Colonic mucosa (tissue), 4 donors: ENCODE measurements at regions of chr3 and their contacts with region 1.

Region 1: GRCh38 chr3:97793420-97794019 is 28.3 kb upstream of the CRYBG3 start:
- DNase-seq: no peak
- H3K4me3 ChIP-seq: no peak overlapping the region
- H3K27ac ChIP-seq: no peak overlapping the region
- H3K4me1 ChIP-seq: no peaks in the 10 kb centered on the region
- H3K27me3 ChIP-seq: no peaks in the 10 kb centered on the region
- CTCF ChIP-seq: peak; percentile 67

Region 2: GRCh38 chr3:97495896-97496295 is 297.6 kb before region 1 on chr3:
- intact Hi-C with region 1: no loop called
- DNase-seq: no peak
- H3K4me3 ChIP-seq: no peak overlapping the region
- H3K27ac ChIP-seq: no peak overlapping the region
- H3K4me1 ChIP-seq: no peaks in the 10 kb centered on the region
- H3K27me3 ChIP-seq: no peaks in the 10 kb centered on the region
- CTCF ChIP-seq: no peak

Region 3: GRCh38 chr3:97932387-97932801 is 138.9 kb after region 1 on chr3:
- intact Hi-C with region 1: loop called (anchors 10 kb)
- DNase-seq: no peak
- H3K4me3 ChIP-seq: no peak overlapping the region
- H3K27ac ChIP-seq: no peak overlapping the region
- H3K4me1 ChIP-seq: no peaks in the 10 kb centered on the region
- H3K27me3 ChIP-seq: no peaks in the 10 kb centered on the region
- CTCF ChIP-seq: no peak

Region 4: DNA sequence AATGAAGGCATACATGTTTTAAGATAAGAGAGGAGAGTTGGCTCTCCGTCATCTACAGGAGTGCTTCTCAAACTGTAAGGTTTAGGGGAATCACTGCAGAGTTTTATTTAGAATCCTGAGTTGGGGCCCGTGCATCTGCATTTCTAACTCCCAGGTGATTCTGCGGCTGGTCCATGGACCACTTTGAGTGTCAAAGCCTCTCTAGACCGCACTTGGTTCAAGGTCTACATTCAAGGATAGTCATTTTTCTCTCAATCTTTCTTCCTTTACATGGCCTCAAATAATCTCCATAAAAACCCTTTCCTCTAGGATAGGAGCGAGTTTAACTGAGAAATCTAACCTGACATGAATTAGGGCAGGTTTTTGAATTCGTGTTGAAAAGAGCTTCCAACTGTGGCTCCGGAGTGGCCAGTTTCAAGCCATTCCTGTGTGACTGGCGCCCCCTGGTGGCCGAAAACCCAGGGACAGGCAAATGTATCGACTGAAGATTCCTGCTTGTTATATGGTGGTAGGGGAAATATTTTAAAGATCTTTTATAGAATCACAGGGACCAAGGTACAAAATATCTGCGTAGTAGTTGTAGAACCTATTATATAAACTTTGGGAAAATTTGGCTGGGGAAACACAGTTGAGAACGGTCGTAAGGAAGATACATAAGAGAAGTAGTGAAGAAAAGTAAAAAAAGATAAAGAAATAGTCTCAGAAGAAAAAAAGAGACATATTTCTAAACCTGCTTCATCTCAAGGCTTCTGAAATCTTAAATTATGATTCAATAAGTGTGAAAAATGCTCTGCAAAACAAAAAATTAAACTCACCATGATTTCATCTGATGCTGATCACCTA is 229.7 kb after region 1 on chr3:
- intact Hi-C with region 1: loop called (anchors 2 kb)
- DNase-seq: peak; percentile 92
- H3K4me3 ChIP-seq: no peak overlapping the region
- H3K27ac ChIP-seq: no peak overlapping the region
- H3K4me1 ChIP-seq: no peaks in the 10 kb centered on the region
- H3K27me3 ChIP-seq: no peaks in the 10 kb centered on the region
- CTCF ChIP-seq: peak; percentile 97

Region 5: DNA sequence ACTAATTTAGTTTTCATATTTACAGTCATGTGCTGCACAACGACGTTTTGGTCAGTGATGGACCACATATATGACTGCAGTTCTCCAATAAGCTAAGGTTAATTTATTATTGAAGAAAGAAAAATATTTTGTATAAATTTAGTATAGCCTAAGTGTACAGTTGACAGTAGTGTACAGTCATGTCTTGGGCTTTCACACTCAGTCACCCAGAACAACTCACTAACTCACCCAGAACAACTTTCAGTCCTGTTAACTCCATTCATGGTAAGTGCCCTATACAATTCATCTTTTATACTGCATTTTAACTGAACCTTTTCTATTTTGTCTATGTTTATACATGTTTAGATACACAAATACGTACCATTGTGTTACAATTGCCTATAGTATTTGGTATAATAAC is 245.4 kb after region 1 on chr3:
- intact Hi-C with region 1: no loop called
- DNase-seq: no peak
- H3K4me3 ChIP-seq: no peak overlapping the region
- H3K27ac ChIP-seq: no peak overlapping the region
- H3K4me1 ChIP-seq: no peaks in the 10 kb centered on the region
- H3K27me3 ChIP-seq: no peaks in the 10 kb centered on the region
- CTCF ChIP-seq: no peak

Region 6: DNA sequence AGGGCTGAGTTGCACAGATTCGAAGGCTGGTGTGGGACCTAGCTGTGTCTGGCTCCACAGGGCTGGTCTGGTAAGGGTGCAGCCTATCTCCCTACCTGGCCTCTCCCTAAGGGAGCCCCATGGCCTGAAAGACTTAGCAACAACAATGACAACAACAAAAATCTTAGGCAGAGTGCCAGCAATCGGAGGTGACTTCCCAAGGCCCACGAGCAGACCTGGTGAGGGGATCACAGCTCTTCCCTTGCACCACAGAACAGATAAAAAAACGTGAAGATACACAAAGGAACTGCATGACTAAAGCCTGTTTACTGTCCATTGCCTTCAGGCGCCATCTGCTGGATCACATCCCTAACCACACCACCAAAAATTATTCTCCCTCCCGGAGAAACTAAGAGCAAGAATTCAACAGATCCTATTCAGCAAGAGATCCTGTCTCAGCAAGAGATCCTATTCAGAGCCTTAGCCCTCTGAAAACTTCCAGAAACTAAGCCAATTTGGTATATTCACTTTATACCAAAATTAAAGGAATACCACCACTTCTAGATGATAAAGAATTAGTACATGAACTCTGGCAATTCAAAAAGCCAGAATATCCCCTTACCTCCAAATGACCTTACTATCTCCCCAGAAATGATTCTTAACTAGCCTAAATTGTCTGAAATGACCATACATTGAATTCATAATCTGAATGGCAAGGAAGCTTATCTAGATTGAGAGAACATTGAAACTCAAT is 536.0 kb after region 1 on chr3:
- intact Hi-C with region 1: loop called (anchors 10 kb)
- DNase-seq: peak; percentile 20
- H3K4me3 ChIP-seq: no peak overlapping the region
- H3K27ac ChIP-seq: no peak overlapping the region
- H3K4me1 ChIP-seq: no peaks in the 10 kb centered on the region
- H3K27me3 ChIP-seq: no peaks in the 10 kb centered on the region
- CTCF ChIP-seq: peak; percentile 23

Region 7: DNA sequence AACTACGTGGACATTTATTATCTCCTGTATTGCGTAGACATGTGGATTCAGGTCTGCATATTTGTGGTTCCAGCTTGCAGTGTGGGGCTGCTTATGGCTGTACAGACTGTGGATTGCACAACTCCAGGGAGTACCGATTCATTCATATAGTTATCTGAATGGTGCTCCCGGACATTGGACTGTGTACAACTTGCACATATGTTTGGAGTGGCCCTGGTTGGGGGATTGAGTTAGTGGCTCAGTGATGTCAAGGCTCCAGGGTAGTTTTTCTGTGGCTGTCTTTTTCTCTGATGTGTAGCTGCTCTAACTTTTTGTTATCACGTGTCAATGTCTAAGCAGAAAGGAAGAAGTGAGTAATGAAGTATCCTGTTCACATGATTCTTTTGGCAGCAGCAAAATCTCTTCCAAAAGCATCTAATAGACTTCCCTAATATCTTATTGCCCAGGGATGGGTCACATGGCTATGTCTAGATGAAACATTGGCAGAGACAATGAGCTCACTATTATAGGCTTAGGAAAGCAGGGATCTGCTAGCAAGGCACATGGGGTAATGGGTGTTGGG is 985.4 kb after region 1 on chr3:
- intact Hi-C with region 1: no loop called
- DNase-seq: no peak
- H3K4me3 ChIP-seq: no peak overlapping the region
- H3K27ac ChIP-seq: no peak overlapping the region
- H3K4me1 ChIP-seq: no peaks in the 10 kb centered on the region
- H3K27me3 ChIP-seq: no peaks in the 10 kb centered on the region
- CTCF ChIP-seq: no peak